Thyroid gland (tissue), 4 donors: ENCODE measurements at regions of chr10 and their contacts with region 1.

Region 1: DNA sequence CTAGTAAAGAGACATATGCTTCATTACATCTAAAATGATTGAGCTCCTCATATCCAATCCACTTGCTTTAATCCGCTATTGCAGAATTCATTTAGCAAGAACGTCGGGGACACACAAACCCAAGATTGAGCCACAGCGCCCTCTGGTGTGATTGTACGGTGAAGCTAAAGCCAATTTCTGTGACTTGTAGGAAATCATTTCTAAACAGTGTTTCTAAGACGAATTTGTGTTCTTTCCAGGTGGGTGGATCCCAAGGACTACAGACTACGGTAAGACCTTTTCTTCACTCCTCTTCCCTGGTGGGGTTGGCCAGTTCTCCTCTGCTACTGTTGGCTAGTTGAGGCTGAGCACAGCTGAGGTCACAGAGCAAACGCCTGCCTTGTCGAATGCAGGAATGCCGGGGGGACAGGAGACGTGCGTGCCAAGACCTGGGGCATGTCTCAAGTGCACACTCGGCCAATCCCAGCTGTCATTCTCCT is 5.2 kb downstream of the DMBT1 start:
- DNase-seq: peak; percentile 87 to 92
- H3K4me3 ChIP-seq: no peak overlapping the region
- H3K27ac ChIP-seq: no peak overlapping the region
- H3K4me1 ChIP-seq: peaks cover 5 to 7% of the 10 kb centered on the region in 2 donors
- H3K27me3 ChIP-seq: no peaks in the 10 kb centered on the region
- CTCF ChIP-seq: peak; percentile 60 to 94 (median 88)
- POLR2A ChIP-seq: no peak

Region 2: GRCh38 chr10:122342293-122343134 is 223.3 kb before region 1 on chr10:
- intact Hi-C with region 1: loop called (anchors 10 kb)
- DNase-seq: peak; percentile 33 to 50
- H3K4me3 ChIP-seq: no peak overlapping the region
- H3K27ac ChIP-seq: no peak overlapping the region
- H3K4me1 ChIP-seq: peaks cover 0 to 6% of the 10 kb centered on the region in 2 donors
- H3K27me3 ChIP-seq: no peaks in the 10 kb centered on the region
- CTCF ChIP-seq: peak; percentile 52 to 71 (median 64)
- POLR2A ChIP-seq: no peak

Region 3: GRCh38 chr10:122435212-122435827 is 130.4 kb before region 1 on chr10:
- intact Hi-C with region 1: loop called (anchors 5 kb)
- DNase-seq: no peak
- H3K4me3 ChIP-seq: no peak overlapping the region
- H3K27ac ChIP-seq: no peak overlapping the region
- H3K4me1 ChIP-seq: no peaks in the 10 kb centered on the region
- H3K27me3 ChIP-seq: no peaks in the 10 kb centered on the region
- CTCF ChIP-seq: peak; percentile 30 to 80 (median 66)
- POLR2A ChIP-seq: no peak

Region 4: DNA sequence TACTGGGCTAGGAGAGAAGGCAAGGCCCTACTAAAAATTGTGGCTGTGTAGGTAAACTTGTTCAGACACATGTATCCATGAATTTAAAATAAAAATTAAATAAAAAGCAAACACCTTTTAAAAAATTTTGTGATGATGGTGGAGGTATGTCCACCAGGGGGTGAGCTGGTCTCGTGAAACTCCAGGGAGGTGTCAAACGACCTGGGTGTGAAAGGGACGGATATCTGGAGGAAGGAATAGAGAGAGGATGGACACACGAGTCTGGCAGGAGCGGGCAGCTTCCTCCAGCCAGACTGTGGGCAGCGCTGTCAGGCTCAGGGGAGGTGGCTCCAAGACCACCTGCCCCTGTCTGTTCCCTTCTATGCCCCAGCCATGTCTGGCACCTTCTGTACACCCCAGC is 40.0 kb before region 1 on chr10:
- intact Hi-C with region 1: loop called (anchors 2 kb)
- DNase-seq: peak; percentile 23 to 43
- H3K4me3 ChIP-seq: no peak overlapping the region
- H3K27ac ChIP-seq: no peak overlapping the region
- H3K4me1 ChIP-seq: no peaks in the 10 kb centered on the region
- H3K27me3 ChIP-seq: no peaks in the 10 kb centered on the region
- CTCF ChIP-seq: peak in 5 of 6 experiments; percentile 18 to 64 (median 36)
- POLR2A ChIP-seq: no peak